ENCODE measurements at regions of chr7 and their contacts with region 1.

Region 1: DNA sequence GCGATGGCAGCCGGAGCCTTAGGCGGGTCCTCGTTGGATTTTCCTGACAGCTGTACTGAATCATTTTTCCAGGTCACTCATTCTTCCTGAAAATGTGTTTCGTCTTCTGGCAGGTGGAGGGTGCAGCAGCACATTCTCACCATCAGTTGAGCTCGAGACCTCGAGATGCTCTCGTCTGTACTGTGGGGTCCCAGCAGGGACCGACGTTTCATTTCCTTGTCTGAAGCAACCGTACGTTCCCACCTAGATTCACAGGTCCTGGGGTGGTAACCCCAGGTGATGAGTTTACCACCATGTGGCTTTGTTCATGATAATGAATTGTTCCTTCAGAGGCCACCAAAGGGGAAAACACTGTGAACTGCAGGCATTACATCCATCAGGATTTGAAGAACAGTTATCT is 298.5 kb upstream of the FOXK1 start:
- DNase-seq: no peak
- H3K4me3 ChIP-seq: no peak overlapping the region
- H3K27ac ChIP-seq: no peak overlapping the region
- H3K4me1 ChIP-seq: no peaks in the 10 kb centered on the region
- H3K27me3 ChIP-seq: no peaks in the 10 kb centered on the region
- CTCF ChIP-seq: no peak
- POLR2A ChIP-seq: no peak

Region 2: GRCh38 chr7:4399121-4399520 is 15.5 kb after region 1 on chr7:
- intact Hi-C with region 1: no loop called
- DNase-seq: no peak
- H3K4me3 ChIP-seq: no peak overlapping the region
- H3K27ac ChIP-seq: no peak overlapping the region
- H3K4me1 ChIP-seq: no peaks in the 10 kb centered on the region
- H3K27me3 ChIP-seq: no peaks in the 10 kb centered on the region
- CTCF ChIP-seq: no peak
- POLR2A ChIP-seq: no peak

Region 3: GRCh38 chr7:5200561-5201270 is 817.1 kb after region 1 on chr7:
- intact Hi-C with region 1: loop called (anchors 5 kb)
- DNase-seq: no peak
- H3K4me3 ChIP-seq: no peak overlapping the region
- H3K27ac ChIP-seq: no peak overlapping the region
- H3K4me1 ChIP-seq: no peaks in the 10 kb centered on the region
- H3K27me3 ChIP-seq: no peaks in the 10 kb centered on the region
- CTCF ChIP-seq: no peak
- POLR2A ChIP-seq: no peak

Measured in breast epithelium (tissue), 4 donors.